Dorsolateral prefrontal cortex (tissue), 120 donors: ENCODE measurements at regions of chr2 and their contacts with region 1.

Region 1: DNA sequence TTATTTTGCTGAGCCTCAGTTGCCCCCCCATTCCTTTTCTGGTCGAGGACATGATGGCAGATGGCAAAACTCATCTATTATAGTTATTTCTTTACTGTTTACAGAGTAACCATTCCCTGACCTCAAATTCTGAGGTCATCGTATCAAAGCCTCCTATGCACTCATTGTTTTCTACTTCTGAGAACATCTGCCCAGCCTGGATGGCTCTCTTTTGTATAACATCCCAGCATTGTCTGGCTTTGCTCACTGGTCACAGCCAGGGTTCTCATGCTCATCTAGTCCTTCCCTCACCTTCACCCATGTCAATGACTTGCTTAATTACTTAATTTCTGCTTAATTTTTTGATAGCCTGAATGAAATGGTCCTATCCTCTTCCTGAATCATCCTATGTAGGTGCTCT is 472.1 kb downstream of the PARD3B start:
- DNase-seq: peak in 2 of 10 donors; percentile 14 to 39
- H3K4me3 ChIP-seq: no peak overlapping the region
- H3K27ac ChIP-seq: peak overlapping the region in 21 of 59 donors; percentile 20 to 75 (median 42)
- H3K27me3 ChIP-seq: no peaks in the 10 kb centered on the region
- CTCF ChIP-seq: no peak

Region 2: GRCh38 chr2:204860274-204860673 is 157.1 kb before region 1 on chr2:
- intact Hi-C with region 1: loop called in 1 of 2 experiments (anchors 10 kb)
- DNase-seq: peak in 9 of 10 donors; percentile 20 to 73 (median 56)
- H3K4me3 ChIP-seq: peak overlapping the region in 1 of 59 donors; percentile 2
- H3K27ac ChIP-seq: no peak overlapping the region
- H3K27me3 ChIP-seq: no peaks in the 10 kb centered on the region
- CTCF ChIP-seq: peak in 2 of 56 donors; percentile 7 to 14